Upper lobe of right lung (tissue), 1 donor: ENCODE measurements at regions of chr1 and their contacts with region 1.

Region 1: DNA sequence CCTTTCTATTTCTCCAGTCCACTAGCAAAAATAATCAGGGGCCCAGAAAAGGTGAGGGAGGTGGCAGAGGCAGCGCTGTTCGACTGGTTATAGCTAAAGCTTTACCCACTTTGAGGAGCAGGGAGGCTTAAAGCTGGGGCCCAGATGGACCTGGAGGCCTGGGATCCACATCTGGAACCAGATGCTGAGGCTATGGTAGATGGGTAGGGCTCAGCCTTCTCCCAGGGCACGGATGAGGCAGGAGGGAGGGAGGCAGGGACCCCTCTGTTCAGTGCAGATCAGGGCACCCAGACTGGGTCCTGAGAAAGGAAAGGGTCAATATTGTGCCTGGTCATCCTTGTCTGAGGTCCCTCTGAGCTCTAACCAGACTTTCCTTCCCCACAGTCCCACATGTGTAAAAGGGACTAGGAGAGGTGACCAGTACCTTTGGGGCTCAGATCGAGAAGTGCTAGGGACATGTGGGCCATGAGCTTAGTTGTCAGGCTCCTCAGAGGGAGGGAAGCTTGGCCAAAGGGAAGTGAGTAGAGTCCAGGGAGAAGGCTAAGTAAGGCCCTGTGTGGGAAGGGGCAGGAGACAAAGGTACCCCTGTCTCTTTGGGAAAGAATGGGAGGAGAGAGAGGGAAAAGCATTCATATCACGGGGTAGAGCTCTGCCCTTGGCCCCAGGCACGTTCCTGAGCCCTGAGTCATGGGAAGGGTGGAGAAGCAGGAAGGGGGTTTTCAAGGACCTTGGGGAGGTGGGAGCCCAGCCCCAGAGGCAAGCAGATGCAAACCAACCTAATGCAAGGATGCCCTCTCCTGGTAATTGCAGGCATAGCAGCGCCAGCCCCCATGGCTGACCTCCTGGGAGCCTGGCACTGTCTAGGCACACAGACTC is 15.4 kb downstream of the LMNA start:
- DNase-seq: peak; percentile 91
- ATAC-seq: peak; percentile 86
- H3K4me3 ChIP-seq: peak overlapping the region; percentile 14
- H3K27ac ChIP-seq: peak overlapping the region; percentile 95
- H3K4me1 ChIP-seq: peaks cover 62% of the 10 kb centered on the region
- H3K27me3 ChIP-seq: no peaks in the 10 kb centered on the region
- CTCF ChIP-seq: peak; percentile 97

Region 2: DNA sequence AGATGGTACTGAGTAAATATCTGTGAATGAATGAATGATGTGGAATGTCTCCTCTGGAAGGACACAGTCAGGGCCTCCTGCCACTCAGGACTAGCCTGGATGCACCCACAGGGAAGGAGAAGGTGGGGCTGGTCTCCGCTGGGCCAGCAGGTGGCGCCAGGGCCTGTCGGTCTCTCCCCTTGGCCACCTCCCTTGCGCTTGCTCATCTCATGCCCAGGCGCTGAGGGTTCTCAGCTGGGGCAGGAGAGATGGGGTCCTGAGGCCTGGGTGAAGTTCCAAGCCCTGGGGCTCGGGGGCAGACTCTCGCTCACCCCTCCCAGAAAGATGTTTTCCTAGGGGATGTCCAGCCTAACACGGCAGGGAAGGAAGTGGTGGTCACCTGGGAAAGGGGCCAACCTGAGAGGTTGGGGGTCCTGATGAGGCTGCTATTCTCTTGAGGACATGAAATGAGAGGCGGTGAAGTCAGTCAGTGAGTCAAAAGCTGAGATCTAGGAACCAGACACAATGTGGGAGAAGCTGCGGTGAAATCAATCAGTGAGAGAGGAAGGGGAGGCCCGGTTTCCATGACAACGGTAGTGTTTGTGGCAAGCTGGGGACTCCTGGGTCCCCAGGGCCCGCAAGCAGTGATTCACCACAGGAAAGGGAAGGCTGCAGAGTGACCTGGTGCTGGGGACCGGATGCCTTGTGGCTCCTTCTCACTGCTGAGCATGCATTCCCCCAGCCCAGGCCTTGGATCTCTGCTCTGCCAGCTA is 33.1 kb before region 1 on chr1:
- intact Hi-C with region 1: loop called (anchors 5 kb)
- DNase-seq: peak; percentile 95
- ATAC-seq: peak; percentile 99
- H3K4me3 ChIP-seq: no peak overlapping the region
- H3K27ac ChIP-seq: peak overlapping the region; percentile 63
- H3K4me1 ChIP-seq: peaks cover 14% of the 10 kb centered on the region
- H3K27me3 ChIP-seq: no peaks in the 10 kb centered on the region
- CTCF ChIP-seq: peak; percentile 98

Region 3: GRCh38 chr1:156193488-156194299 is 63.8 kb after region 1 on chr1 and contains the start of gene SLC25A44:
- intact Hi-C with region 1: no loop called
- DNase-seq: peak; percentile 96
- ATAC-seq: peak; percentile 99
- H3K4me3 ChIP-seq: peak within 1 kb of the TSS; percentile 97
- H3K27ac ChIP-seq: peak within 1 kb of the TSS; percentile 83
- H3K4me1 ChIP-seq: peaks cover 9% of the 10 kb centered on the region
- H3K27me3 ChIP-seq: no peaks in the 10 kb centered on the region
- CTCF ChIP-seq: peak; percentile 60
- total RNA-seq, gene SLC25A44: 24.9 TPM